ENCODE measurements at regions of chr17 and their contacts with region 1.

Region 1: DNA sequence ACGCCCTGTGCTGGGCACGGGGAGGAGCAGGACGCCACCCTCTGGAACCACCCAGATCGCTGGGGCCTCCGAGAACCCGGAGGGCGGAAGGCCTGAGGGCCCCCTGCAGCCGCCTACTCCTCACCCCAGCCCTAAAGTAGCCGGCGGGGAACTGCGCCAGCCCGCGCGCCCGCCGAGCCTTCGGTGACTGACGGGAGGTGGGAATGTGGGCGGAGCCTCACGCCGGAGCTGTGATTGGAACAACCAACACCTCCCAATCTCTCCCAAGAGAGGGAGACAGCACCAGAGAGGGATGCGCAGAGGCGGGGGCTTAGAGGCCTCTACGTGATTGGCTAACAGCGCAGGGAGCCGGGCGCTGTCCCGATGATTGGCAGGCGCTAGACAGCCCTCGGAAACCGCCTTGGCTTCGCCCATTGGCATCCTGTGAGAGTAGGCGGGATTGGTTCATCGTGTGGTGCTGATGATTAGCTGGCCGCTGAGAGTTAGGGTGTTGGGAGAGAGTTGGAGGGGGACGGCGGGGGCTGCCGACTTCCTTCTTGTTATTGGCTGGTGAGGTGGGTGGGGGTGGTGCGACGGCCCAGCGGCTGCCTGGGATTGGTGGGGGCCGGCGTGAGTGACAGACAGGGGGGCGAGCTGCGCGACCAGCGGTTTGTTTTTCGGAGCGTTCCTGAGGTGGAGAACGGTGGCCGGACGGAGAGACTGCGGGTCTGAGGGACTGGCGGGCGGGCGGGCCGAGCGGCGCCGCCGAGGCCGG is at the start of gene MAP3K3:
- DNase-seq: peak; percentile 100
- H3K4me3 ChIP-seq: peak within 1 kb of the TSS; percentile 70
- CTCF ChIP-seq: no peak

Region 2: DNA sequence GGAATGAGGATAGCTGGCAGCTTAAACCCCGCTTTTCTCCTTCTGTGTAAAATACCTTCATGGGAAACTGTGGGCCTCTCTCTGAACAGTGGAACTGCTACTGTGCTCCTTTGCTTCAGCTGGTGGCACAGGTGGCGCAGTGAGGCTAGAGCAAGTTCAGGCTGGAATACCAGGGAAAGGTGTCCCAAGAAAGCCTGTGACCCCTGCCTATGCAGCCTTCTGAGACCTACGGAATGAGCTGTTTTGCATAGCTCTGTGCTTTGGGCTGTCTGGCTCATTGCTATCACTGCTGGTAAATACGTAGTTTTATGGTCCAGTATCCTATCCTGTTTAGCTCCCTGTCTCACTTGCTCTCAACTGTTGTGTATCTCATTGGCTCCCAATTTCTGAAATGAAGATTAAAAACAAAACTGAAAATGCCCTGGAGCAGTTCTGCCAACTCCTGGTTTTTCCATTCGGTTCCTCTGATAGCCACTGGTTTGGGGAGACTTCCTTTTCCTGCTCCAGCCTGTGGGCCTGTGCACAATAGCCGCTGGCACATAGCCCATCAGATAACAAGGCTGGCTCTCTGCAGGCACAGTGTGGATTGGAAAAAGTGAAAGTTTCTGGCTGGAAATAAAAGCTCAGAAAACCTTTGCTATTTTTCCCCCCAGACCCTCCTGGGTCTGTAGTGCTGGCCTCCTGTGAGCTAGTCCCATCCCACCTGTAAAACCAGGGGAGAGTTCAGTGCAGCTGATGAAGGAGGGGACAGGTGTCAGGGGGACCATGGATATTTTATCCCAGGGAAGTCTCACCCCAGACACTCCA is 53.9 kb after region 1 on chr17:
- in situ Hi-C with region 1: loop called (anchors 5 kb)
- DNase-seq: peak; percentile 90
- H3K4me3 ChIP-seq: no peak overlapping the region
- CTCF ChIP-seq: no peak